IMR-90 (cell line): ENCODE measurements at regions of chr3 and their contacts with region 1.

Region 1: GRCh38 chr3:32934150-32934742 is 17.2 kb upstream of the CCR4 start:
- DNase-seq: peak; percentile 13
- ATAC-seq: no peak
- H3K4me3 ChIP-seq: no peak overlapping the region
- H3K27ac ChIP-seq: no peak overlapping the region
- H3K4me1 ChIP-seq: no peaks in the 10 kb centered on the region
- H3K27me3 ChIP-seq: peaks cover 9% of the 10 kb centered on the region
- CTCF ChIP-seq: peak; percentile 66
- POLR2A ChIP-seq: no peak
- RAD21 ChIP-seq: peak; percentile 59

Region 2: DNA sequence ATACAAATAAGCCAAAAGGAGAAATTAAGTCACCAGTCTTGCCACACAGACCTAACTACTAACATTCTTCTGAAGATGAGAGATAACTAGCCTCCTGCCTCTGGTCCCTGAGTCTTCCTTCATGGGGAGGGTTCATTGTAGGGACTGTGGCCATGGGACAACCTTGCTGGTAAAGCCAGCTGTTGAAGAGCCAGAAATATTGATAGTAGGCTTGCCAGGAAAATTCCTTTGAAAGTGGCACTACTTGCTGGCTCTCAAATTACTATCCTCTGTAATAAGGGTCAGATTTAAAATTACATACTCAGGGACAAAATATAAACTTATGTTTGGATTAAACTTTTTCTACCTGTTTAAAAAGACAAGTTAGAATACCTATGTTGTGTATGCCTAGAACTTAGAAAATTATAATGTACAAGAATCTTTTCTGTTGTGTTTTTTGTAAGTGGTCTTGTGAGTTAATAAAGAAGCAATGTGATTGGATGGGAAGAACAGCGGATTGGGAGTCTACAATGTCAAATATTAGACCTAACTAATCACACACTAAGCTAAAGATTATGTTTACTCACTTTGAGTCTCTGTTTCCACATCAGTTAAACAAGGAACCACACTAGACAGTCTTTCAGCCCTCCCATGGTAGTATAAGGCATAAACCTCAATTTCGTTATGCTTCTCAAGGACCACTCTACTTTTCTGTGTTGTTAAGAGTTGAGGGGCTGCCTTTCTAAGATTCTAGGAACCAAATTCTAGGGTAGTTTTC is 176.4 kb before region 1 on chr3:
- CTCF ChIA-PET with region 1: no interaction called
- POLR2A ChIA-PET with region 1: no interaction called
- dilution Hi-C with region 1: no loop called
- in situ Hi-C with region 1: no loop called
- intact Hi-C with region 1: no loop called
- DNase-seq: peak; percentile 15
- ATAC-seq: peak; percentile 70
- H3K4me3 ChIP-seq: no peak overlapping the region
- H3K27ac ChIP-seq: peak overlapping the region; percentile 35; the same call in 1 of the 2 replicates
- H3K4me1 ChIP-seq: peaks cover 3% of the 10 kb centered on the region
- H3K27me3 ChIP-seq: no peaks in the 10 kb centered on the region; the same call in 1 of the 2 replicates
- CTCF ChIP-seq: no peak
- POLR2A ChIP-seq: no peak
- RAD21 ChIP-seq: no peak

Region 3: GRCh38 chr3:32816439-32817256 is 117.6 kb before region 1 on chr3:
- CTCF ChIA-PET with region 1: interaction called, 3 read pairs
- POLR2A ChIA-PET with region 1: no interaction called
- dilution Hi-C with region 1: no loop called
- in situ Hi-C with region 1: no loop called
- intact Hi-C with region 1: loop called (anchors 10 kb)
- DNase-seq: no peak
- ATAC-seq: 0 out of 2 replicates have a peak, but pooled peaks have one; percentile 29
- H3K4me3 ChIP-seq: peak overlapping the region; percentile 38
- H3K27ac ChIP-seq: no peak overlapping the region
- H3K4me1 ChIP-seq: peaks cover 3% of the 10 kb centered on the region; the same call in 1 of the 2 replicates
- H3K27me3 ChIP-seq: peaks cover 71% of the 10 kb centered on the region
- CTCF ChIP-seq: no peak
- POLR2A ChIP-seq: no peak
- RAD21 ChIP-seq: no peak

Region 4: DNA sequence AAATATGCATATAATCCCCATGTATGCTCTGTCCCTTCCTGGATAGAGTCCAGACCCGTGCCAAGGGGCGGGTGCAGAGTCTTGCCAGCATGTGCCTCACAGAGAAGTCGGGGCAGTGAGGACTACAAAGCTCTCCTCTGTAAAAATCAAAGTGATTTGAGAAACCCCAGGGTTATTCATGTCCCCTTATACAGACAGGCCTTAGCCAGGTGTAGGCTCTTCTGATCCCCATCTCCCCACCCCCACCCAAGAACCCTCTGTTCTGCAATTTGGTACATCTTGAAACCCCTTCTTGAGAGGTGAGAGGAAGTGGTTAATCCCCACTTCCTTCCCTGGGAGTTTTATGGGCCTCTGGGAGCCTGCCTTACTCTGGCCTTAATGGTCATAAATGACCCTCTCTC is 91.7 kb before region 1 on chr3:
- CTCF ChIA-PET with region 1: no interaction called
- POLR2A ChIA-PET with region 1: no interaction called
- dilution Hi-C with region 1: no loop called
- in situ Hi-C with region 1: no loop called
- intact Hi-C with region 1: no loop called
- DNase-seq: no peak
- ATAC-seq: no peak
- H3K4me3 ChIP-seq: no peak overlapping the region
- H3K27ac ChIP-seq: no peak overlapping the region
- H3K4me1 ChIP-seq: no peaks in the 10 kb centered on the region
- H3K27me3 ChIP-seq: peaks cover 18% of the 10 kb centered on the region
- CTCF ChIP-seq: no peak
- POLR2A ChIP-seq: no peak
- RAD21 ChIP-seq: no peak

Region 5: GRCh38 chr3:33277193-33277882 is 343.1 kb after region 1 on chr3 and contains the start of gene FBXL2:
- CTCF ChIA-PET with region 1: no interaction called
- POLR2A ChIA-PET with region 1: no interaction called
- dilution Hi-C with region 1: no loop called
- in situ Hi-C with region 1: no loop called
- intact Hi-C with region 1: no loop called
- DNase-seq: peak; percentile 49
- ATAC-seq: peak; percentile 97
- H3K4me3 ChIP-seq: peak within 1 kb of the TSS; percentile 74
- H3K27ac ChIP-seq: peak within 1 kb of the TSS; percentile 2; the same call in 1 of the 2 replicates
- H3K4me1 ChIP-seq: peaks cover 2% of the 10 kb centered on the region; the same call in 1 of the 2 replicates
- H3K27me3 ChIP-seq: no peaks in the 10 kb centered on the region
- CTCF ChIP-seq: no peak
- POLR2A ChIP-seq: no peak
- RAD21 ChIP-seq: no peak
- total RNA-seq, gene FBXL2: 15.6 and 21.0 TPM in 2 replicates

Region 6: GRCh38 chr3:33339758-33340157 is 405.5 kb after region 1 on chr3:
- CTCF ChIA-PET with region 1: no interaction called
- POLR2A ChIA-PET with region 1: no interaction called
- dilution Hi-C with region 1: no loop called
- in situ Hi-C with region 1: no loop called
- intact Hi-C with region 1: no loop called
- DNase-seq: no peak
- ATAC-seq: no peak
- H3K4me3 ChIP-seq: no peak overlapping the region
- H3K27ac ChIP-seq: no peak overlapping the region
- H3K4me1 ChIP-seq: no peaks in the 10 kb centered on the region
- H3K27me3 ChIP-seq: no peaks in the 10 kb centered on the region
- CTCF ChIP-seq: no peak
- POLR2A ChIP-seq: no peak
- RAD21 ChIP-seq: no peak

Region 7: DNA sequence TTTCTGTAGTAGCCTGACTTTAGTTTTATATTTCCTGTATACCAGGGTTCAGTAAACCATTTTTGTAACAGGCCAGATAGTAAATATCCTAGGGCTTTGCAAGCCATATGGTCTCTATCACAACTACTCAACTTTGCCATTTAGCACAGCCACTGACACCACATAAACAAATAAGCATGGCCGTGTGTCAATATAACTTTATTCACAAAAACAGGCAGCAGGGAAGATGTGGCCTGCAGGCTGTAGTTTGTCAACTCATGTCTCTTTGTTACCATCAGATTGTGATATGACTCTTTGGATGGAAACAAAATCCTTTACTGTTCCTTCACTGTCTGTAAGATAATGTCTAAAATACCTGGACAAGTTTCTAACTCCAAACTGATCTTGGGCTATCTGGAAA is 629.2 kb after region 1 on chr3:
- CTCF ChIA-PET with region 1: no interaction called
- POLR2A ChIA-PET with region 1: interaction called, 14 read pairs
- dilution Hi-C with region 1: no loop called
- in situ Hi-C with region 1: no loop called
- intact Hi-C with region 1: no loop called
- DNase-seq: no peak
- ATAC-seq: no peak
- H3K4me3 ChIP-seq: no peak overlapping the region
- H3K27ac ChIP-seq: no peak overlapping the region
- H3K4me1 ChIP-seq: no peaks in the 10 kb centered on the region
- H3K27me3 ChIP-seq: no peaks in the 10 kb centered on the region
- CTCF ChIP-seq: no peak
- POLR2A ChIP-seq: no peak
- RAD21 ChIP-seq: no peak